CD4-positive, alpha-beta T cell (primary cell): ENCODE measurements at regions of chr5 and their contacts with region 1.

Region 1: DNA sequence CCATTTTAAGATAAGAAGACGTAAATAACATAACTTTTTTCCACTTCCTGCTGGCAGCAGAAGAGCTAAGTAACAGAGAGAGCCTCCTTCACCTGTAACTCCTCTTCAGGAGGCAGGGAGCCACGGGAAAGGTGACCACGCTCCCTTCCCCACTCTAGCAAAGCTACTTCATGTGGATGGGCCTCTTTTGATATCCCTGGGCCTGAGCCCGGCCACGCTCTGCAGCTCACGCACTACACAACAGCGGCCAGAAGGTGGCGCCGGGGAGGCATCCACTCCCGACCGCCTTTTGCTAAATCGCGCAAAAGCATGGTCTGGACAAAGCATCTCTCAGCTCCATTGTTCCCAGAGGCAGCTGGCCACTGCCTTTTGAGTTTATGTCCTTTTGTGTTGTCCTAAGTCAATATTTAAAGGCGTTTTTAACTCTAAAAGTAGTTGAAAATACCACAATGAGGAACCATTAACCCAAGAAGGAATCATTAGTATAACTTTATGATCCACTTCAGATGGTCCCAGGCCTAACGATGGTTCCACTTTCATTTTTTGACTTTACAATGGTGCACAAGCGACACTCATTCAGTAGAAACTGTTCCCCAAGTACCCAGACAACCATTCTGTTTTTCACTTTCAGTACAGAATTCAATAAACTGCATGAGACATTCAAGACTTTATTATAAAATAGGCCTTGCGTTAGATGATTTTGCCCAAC is 23.6 kb downstream of the CMBL start:
- DNase-seq: peak; percentile 56 to 85 (median 72)
- ATAC-seq: peak; percentile 97
- H3K4me3 ChIP-seq: no peak overlapping the region
- H3K4me3 Mint-ChIP-seq: no peak overlapping the region
- H3K27ac ChIP-seq: no peak overlapping the region
- H3K27ac Mint-ChIP-seq: no peak overlapping the region
- H3K4me1 ChIP-seq: peaks cover 14% of the 10 kb centered on the region
- H3K4me1 Mint-ChIP-seq: no peaks in the 10 kb centered on the region
- H3K27me3 ChIP-seq: no peaks in the 10 kb centered on the region
- H3K27me3 Mint-ChIP-seq: no peaks in the 10 kb centered on the region
- CTCF ChIP-seq: peak; percentile 99

Region 2: DNA sequence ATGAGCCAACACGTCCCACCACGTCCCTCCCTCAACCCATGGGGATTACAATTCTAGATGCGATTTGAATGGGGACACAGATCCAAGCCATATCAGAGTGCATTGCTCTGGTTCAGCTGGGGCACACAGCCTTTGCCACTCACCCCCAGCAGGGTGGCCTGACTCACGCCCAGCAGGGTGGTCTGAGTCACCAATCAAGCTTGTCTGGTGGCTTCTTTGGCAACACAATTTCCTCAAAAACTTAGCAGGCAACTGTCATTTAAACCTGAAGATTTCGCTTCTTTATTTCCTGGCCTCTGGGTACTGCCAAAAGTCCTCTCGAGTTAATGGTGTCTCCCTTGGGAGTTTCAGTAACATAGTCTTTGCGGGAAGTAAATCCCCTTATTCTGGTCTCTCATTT is 721.9 kb before region 1 on chr5:
- CTCF ChIA-PET with region 1: no interaction called
- POLR2A ChIA-PET with region 1: no interaction called
- intact Hi-C with region 1: no loop called
- DNase-seq: no peak
- ATAC-seq: no peak
- H3K4me3 ChIP-seq: no peak overlapping the region
- H3K4me3 Mint-ChIP-seq: no peak overlapping the region
- H3K27ac ChIP-seq: no peak overlapping the region
- H3K27ac Mint-ChIP-seq: no peak overlapping the region
- H3K4me1 ChIP-seq: no peaks in the 10 kb centered on the region
- H3K4me1 Mint-ChIP-seq: no peaks in the 10 kb centered on the region
- H3K27me3 ChIP-seq: no peaks in the 10 kb centered on the region
- H3K27me3 Mint-ChIP-seq: peaks cover 3% of the 10 kb centered on the region
- CTCF ChIP-seq: no peak

Region 3: DNA sequence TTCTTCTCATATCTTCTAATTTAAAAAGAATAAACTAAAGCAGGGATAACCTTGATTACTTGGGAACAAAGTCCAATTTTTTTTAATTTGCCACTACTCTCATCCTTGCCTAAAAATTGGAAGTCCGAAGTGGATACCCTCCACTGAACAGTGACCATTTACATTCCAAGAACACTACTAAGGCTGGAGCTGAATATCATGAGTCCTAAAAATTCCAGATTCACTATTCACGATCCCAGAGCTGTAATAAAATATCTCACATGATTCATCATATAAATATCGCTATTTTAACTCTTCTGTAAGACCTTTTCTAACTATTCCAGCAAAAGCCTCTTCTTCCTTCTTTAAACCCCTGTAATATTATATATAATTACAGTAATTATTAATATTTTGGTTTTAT is 91.8 kb before region 1 on chr5:
- CTCF ChIA-PET with region 1: no interaction called
- POLR2A ChIA-PET with region 1: no interaction called
- intact Hi-C with region 1: no loop called
- DNase-seq: no peak
- ATAC-seq: no peak
- H3K4me3 ChIP-seq: no peak overlapping the region
- H3K4me3 Mint-ChIP-seq: no peak overlapping the region
- H3K27ac ChIP-seq: no peak overlapping the region
- H3K27ac Mint-ChIP-seq: no peak overlapping the region
- H3K4me1 ChIP-seq: no peaks in the 10 kb centered on the region
- H3K4me1 Mint-ChIP-seq: no peaks in the 10 kb centered on the region
- H3K27me3 ChIP-seq: no peaks in the 10 kb centered on the region
- H3K27me3 Mint-ChIP-seq: no peaks in the 10 kb centered on the region
- CTCF ChIP-seq: no peak

Region 4: GRCh38 chr5:10364186-10364683 is 80.2 kb after region 1 on chr5:
- CTCF ChIA-PET with region 1: interaction called, 28 read pairs
- POLR2A ChIA-PET with region 1: no interaction called
- intact Hi-C with region 1: loop called (anchors 1 to 10 kb)
- DNase-seq: peak in 3 of 14 experiments; percentile 30 to 63 (median 57)
- ATAC-seq: peak; percentile 55
- H3K4me3 ChIP-seq: no peak overlapping the region
- H3K4me3 Mint-ChIP-seq: peak overlapping the region; percentile 31
- H3K27ac ChIP-seq: no peak overlapping the region
- H3K27ac Mint-ChIP-seq: no peak overlapping the region
- H3K4me1 ChIP-seq: peaks cover 34% of the 10 kb centered on the region
- H3K4me1 Mint-ChIP-seq: peaks cover 80% of the 10 kb centered on the region
- H3K27me3 ChIP-seq: no peaks in the 10 kb centered on the region
- H3K27me3 Mint-ChIP-seq: no peaks in the 10 kb centered on the region
- CTCF ChIP-seq: no peak